ENCODE measurements at regions of chr16 and their contacts with region 1.

Region 1: DNA sequence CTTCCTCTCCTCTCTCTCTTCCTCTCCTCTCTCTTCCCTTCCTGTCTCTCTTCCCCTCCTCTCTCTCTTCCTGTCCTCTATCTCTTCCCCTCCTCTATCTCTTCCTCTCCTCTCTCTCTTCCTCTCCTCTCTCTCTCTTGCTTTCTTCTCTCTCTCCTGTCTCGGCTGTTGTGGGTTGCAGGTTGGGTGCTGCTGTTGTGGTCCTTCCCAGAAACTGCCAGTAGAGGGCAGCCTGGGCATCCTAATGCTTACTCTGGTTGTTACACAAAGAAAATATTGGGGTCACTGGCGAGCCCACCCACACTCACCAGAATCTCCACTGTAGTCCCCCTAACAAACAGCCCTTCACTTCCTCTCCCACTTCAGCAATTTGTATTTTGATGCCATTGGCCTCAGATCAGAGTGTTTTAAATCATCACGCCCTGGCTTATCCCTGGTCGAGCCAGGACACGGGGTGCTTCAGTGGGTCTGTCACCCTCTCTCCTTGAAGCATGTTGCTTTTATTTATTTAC is 4.9 kb upstream of the MMP15 start:
- DNase-seq: peak in 2 of 3 donors; percentile 71 to 88
- ATAC-seq: no peak
- H3K4me3 ChIP-seq: no peak overlapping the region
- H3K4me1 ChIP-seq: peaks cover 27% of the 10 kb centered on the region
- CTCF ChIP-seq: peak; percentile 62

Region 2: GRCh38 chr16:57648590-57649442 is 371.9 kb before region 1 on chr16:
- intact Hi-C with region 1: no loop called
- DNase-seq: peak; percentile 81 to 91 (median 91)
- ATAC-seq: peak; percentile 96
- H3K4me3 ChIP-seq: no peak overlapping the region
- H3K4me1 ChIP-seq: no peaks in the 10 kb centered on the region
- CTCF ChIP-seq: peak; percentile 99

Region 3: DNA sequence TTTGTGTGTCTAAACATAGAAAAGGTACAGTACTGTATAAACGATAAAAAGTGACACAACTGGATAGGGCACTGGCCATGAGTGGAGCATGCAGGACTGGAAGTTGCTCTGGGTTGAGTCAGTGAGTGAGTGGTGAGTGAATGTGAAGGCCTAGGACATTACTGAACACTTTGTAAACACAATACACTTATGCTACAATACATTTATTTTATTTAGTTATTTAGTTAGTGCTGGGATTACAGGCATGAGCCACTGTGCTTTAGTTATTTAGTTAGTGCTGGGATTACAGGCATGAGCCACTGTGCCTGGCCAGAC is 103.9 kb after region 1 on chr16:
- intact Hi-C with region 1: loop called in 1 of 2 experiments (anchors 5 kb)
- DNase-seq: no peak
- ATAC-seq: no peak
- H3K4me3 ChIP-seq: no peak overlapping the region
- H3K4me1 ChIP-seq: peaks cover 55% of the 10 kb centered on the region
- CTCF ChIP-seq: no peak